ENCODE measurements at regions of chr2 and their contacts with region 1.

Region 1: GRCh38 chr2:114488841-114489530 is 46.5 kb downstream of the DPP10 start:
- DNase-seq: no peak
- H3K4me3 ChIP-seq: no peak overlapping the region
- H3K4me3 Mint-ChIP-seq: no peak overlapping the region
- H3K27ac Mint-ChIP-seq: no peak overlapping the region
- H3K4me1 ChIP-seq: no peaks in the 10 kb centered on the region
- H3K4me1 Mint-ChIP-seq: no peaks in the 10 kb centered on the region
- H3K27me3 ChIP-seq: no peaks in the 10 kb centered on the region
- H3K27me3 Mint-ChIP-seq: no peaks in the 10 kb centered on the region
- CTCF ChIP-seq: no peak

Region 2: GRCh38 chr2:114543236-114543766 is 54.3 kb after region 1 on chr2:
- CTCF ChIA-PET with region 1: no interaction called
- POLR2A ChIA-PET with region 1: no interaction called
- intact Hi-C with region 1: loop called (anchors 1 kb)
- DNase-seq: peak; percentile 56 to 60
- H3K4me3 ChIP-seq: no peak overlapping the region
- H3K4me3 Mint-ChIP-seq: peak overlapping the region; percentile 18
- H3K27ac Mint-ChIP-seq: peak overlapping the region; percentile 5
- H3K4me1 ChIP-seq: peaks cover 9% of the 10 kb centered on the region
- H3K4me1 Mint-ChIP-seq: peaks cover 16% of the 10 kb centered on the region
- H3K27me3 ChIP-seq: no peaks in the 10 kb centered on the region
- H3K27me3 Mint-ChIP-seq: no peaks in the 10 kb centered on the region
- CTCF ChIP-seq: peak; percentile 54 to 64

Measured in Caco-2 (cell line).